CD8-positive, alpha-beta T cell (primary cell): ENCODE measurements at regions of chr11 and their contacts with region 1.

Region 1: GRCh38 chr11:46346886-46347636 is at the start of gene DGKZ:
- DNase-seq: peak; percentile 83 to 96 (median 87)
- ATAC-seq: peak; percentile 80
- H3K4me3 ChIP-seq: peak within 1 kb of the TSS; percentile 72 to 94
- H3K4me3 Mint-ChIP-seq: peak within 1 kb of the TSS; percentile 90
- H3K27ac ChIP-seq: peak within 1 kb of the TSS; percentile 55 to 68
- H3K27ac Mint-ChIP-seq: peak within 1 kb of the TSS; percentile 90
- H3K4me1 ChIP-seq: peaks cover 72% of the 10 kb centered on the region
- H3K4me1 Mint-ChIP-seq: peaks cover 79% of the 10 kb centered on the region
- H3K27me3 ChIP-seq: no peaks in the 10 kb centered on the region
- H3K27me3 Mint-ChIP-seq: no peaks in the 10 kb centered on the region
- CTCF ChIP-seq: peak; percentile 55
- total RNA-seq, gene DGKZ: 131 to 135 TPM

Region 2: GRCh38 chr11:46121724-46122477 is 225.2 kb before region 1 on chr11:
- CTCF ChIA-PET with region 1: interaction called, 3 read pairs
- POLR2A ChIA-PET with region 1: no interaction called
- intact Hi-C with region 1: loop called (anchors 2 to 10 kb)
- DNase-seq: peak; percentile 50 to 92 (median 73)
- ATAC-seq: peak; percentile 54
- H3K4me3 ChIP-seq: peak overlapping the region; percentile 58 to 63
- H3K4me3 Mint-ChIP-seq: peak overlapping the region; percentile 88
- H3K27ac ChIP-seq: peak overlapping the region; percentile 1 to 26
- H3K27ac Mint-ChIP-seq: peak overlapping the region; percentile 96
- H3K4me1 ChIP-seq: peaks cover 30% of the 10 kb centered on the region
- H3K4me1 Mint-ChIP-seq: peaks cover 33% of the 10 kb centered on the region
- H3K27me3 ChIP-seq: no peaks in the 10 kb centered on the region
- H3K27me3 Mint-ChIP-seq: no peaks in the 10 kb centered on the region
- CTCF ChIP-seq: no peak

Region 3: DNA sequence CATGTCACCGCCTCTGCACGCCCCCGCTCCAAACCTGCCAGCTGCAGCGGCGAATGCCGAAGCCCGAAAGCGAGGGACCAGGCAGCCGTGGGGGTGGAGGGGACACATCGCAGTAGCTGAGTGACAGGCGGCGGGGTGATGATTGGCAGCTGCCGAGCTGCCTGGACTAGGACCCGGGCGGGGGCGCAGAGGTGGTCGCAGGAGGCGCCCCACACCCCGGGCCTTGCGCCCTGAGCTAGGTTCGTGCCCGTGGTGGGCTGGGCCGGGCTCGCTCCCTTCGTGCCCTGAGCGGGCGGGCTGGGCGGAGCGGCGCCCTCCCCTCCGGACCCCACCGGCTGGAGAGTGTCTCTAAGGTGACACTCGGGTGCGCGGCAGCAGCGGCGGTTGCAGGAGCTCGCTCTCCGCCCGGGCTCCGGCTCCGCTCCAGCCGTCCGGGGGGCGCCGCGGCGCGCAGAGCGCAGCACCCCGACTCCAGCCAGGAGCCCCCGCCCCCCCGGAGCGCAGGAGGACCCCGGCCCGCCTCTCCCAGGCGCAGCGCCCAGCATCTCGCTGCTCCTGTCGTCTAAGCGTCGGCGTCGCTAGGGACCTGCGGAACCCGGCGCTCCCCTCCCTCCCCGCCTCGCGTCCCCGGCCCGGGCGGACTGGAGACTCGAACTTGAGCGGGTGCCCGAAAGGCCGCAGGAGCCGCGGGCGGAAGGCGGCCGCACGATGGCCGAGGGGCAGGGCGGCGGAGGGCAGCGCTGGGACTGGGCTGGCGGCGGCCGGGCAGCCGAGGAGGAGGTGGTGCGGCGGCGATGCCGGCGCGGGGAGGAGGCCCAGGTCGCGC is 14.3 kb before region 1 on chr11:
- CTCF ChIA-PET with region 1: interaction called, 25 read pairs
- POLR2A ChIA-PET with region 1: interaction called, 47 read pairs
- intact Hi-C with region 1: loop called (anchors 1 kb)
- DNase-seq: peak in 7 of 9 experiments; percentile 36 to 71 (median 58)
- ATAC-seq: peak; percentile 32
- H3K4me3 ChIP-seq: peak overlapping the region; percentile 43 to 54
- H3K4me3 Mint-ChIP-seq: peak overlapping the region; percentile 86
- H3K27ac ChIP-seq: peak overlapping the region in 1 of 2 experiments; percentile 6
- H3K27ac Mint-ChIP-seq: peak overlapping the region; percentile 95
- H3K4me1 ChIP-seq: peaks cover 62% of the 10 kb centered on the region
- H3K4me1 Mint-ChIP-seq: peaks cover 61% of the 10 kb centered on the region
- H3K27me3 ChIP-seq: peaks cover 0 to 12% of the 10 kb centered on the region in 2 experiments
- H3K27me3 Mint-ChIP-seq: no peaks in the 10 kb centered on the region
- CTCF ChIP-seq: no peak

Region 4: DNA sequence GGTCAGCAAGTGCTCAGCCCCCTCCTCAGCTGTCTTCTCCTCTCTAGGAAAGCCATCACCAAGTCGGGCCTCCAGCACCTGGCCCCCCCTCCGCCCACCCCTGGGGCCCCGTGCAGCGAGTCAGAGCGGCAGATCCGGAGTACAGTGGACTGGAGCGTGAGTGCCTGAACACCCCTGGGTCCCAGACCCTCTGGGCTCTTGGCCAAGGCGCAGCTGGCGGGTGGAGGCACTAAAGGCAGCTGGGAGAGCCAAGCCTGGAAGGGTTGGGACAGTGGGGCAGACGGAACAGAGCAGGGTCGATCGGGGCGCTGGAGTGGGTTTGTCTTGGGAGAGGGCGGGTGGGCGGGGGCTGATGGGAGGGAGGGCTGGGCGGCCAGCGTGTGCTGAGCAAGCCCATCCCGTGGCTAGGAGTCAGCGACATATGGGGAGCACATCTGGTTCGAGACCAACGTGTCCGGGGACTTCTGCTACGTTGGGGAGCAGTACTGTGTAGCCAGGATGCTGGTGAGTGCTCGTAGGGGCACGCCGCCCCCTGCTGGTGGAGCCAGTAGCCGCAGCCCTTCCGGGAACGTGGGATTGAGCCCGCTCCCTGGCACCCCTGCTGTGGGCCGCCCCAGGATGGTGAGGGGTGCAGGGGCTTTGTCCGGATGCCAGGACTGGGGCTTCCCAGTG is 20.3 kb after region 1 on chr11:
- CTCF ChIA-PET with region 1: interaction called, 412 read pairs
- POLR2A ChIA-PET with region 1: interaction called, 32 read pairs
- intact Hi-C with region 1: loop called (anchors 1 kb)
- DNase-seq: peak; percentile 54 to 90 (median 81)
- ATAC-seq: peak; percentile 96
- H3K4me3 ChIP-seq: no peak overlapping the region
- H3K4me3 Mint-ChIP-seq: no peak overlapping the region
- H3K27ac ChIP-seq: no peak overlapping the region
- H3K27ac Mint-ChIP-seq: no peak overlapping the region
- H3K4me1 ChIP-seq: peaks cover 50% of the 10 kb centered on the region
- H3K4me1 Mint-ChIP-seq: peaks cover 43% of the 10 kb centered on the region
- H3K27me3 ChIP-seq: no peaks in the 10 kb centered on the region
- H3K27me3 Mint-ChIP-seq: no peaks in the 10 kb centered on the region
- CTCF ChIP-seq: peak; percentile 72

Region 5: DNA sequence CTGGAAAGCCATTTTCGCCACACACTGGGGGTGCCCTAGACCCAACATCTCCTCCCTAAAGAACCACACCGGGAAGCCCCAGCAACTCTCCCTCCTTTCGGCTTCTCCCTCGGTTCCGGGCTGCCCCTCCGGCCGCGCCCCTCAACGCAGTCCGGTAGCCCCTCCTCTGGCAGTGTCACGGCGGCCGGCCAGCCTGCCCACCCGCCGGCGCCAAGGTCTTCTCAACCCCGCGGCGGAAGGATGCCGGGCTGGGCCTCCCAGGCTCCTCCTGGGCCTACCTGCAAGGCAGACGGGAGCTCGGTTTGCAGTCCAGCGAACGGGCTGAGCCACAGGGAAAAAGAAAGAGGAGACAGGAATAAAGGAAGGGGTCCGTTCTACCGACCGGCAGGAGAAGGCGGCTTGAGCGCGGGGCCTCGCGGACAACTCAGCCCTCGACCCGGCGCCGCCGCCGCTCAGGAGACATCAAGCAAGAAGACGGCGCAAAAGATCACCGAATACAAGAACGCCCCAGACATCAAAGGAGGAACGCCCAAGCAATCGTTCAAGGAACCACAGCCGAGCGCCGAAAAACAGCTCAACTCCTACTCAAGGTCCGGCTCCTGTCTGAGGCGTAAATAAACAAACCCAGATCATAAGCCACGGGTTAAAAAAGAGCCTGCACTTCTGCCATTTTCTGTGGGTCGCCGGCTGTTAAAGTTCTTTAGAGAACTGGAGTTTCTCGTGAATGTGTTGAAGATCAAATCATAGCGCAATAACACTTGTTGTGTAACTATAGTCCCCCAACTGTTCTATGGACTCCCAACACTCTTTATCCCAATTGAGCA is 246.7 kb after region 1 on chr11 and contains the start of gene AMBRA1:
- CTCF ChIA-PET with region 1: no interaction called
- POLR2A ChIA-PET with region 1: no interaction called
- intact Hi-C with region 1: loop called in 1 of 2 experiments (anchors 10 kb)
- DNase-seq: peak; percentile 70 to 91 (median 81)
- ATAC-seq: peak; percentile 90
- H3K4me3 ChIP-seq: peak within 1 kb of the TSS; percentile 67 to 80
- H3K4me3 Mint-ChIP-seq: peak within 1 kb of the TSS; percentile 98
- H3K27ac ChIP-seq: peak within 1 kb of the TSS; percentile 57 to 67
- H3K27ac Mint-ChIP-seq: peak within 1 kb of the TSS; percentile 96
- H3K4me1 ChIP-seq: peaks cover 32% of the 10 kb centered on the region
- H3K4me1 Mint-ChIP-seq: peaks cover 43% of the 10 kb centered on the region
- H3K27me3 ChIP-seq: no peaks in the 10 kb centered on the region
- H3K27me3 Mint-ChIP-seq: no peaks in the 10 kb centered on the region
- CTCF ChIP-seq: no peak
- total RNA-seq, gene AMBRA1: 31.2 to 34.1 TPM

Region 6: GRCh38 chr11:46889251-46889650 is 542.2 kb after region 1 on chr11:
- CTCF ChIA-PET with region 1: no interaction called
- POLR2A ChIA-PET with region 1: no interaction called
- intact Hi-C with region 1: no loop called
- DNase-seq: peak in 1 of 9 experiments; percentile 8
- ATAC-seq: no peak
- H3K4me3 ChIP-seq: no peak overlapping the region
- H3K4me3 Mint-ChIP-seq: no peak overlapping the region
- H3K27ac ChIP-seq: no peak overlapping the region
- H3K27ac Mint-ChIP-seq: no peak overlapping the region
- H3K4me1 ChIP-seq: no peaks in the 10 kb centered on the region
- H3K4me1 Mint-ChIP-seq: peaks cover 3% of the 10 kb centered on the region
- H3K27me3 ChIP-seq: no peaks in the 10 kb centered on the region
- H3K27me3 Mint-ChIP-seq: no peaks in the 10 kb centered on the region
- CTCF ChIP-seq: no peak